ENCODE measurements at regions of chr21 and their contacts with region 1.

Region 1: GRCh38 chr21:26715878-26716506 is 129.2 kb downstream of the ADAMTS1 start:
- DNase-seq: no peak
- H3K4me3 ChIP-seq: no peak overlapping the region
- H3K27ac ChIP-seq: no peak overlapping the region
- H3K4me1 ChIP-seq: no peaks in the 10 kb centered on the region
- H3K27me3 ChIP-seq: no peaks in the 10 kb centered on the region
- CTCF ChIP-seq: peak in 3 of 4 experiments; percentile 32 to 70 (median 52)
- EP300 ChIP-seq: no peak
- POLR2A ChIP-seq: no peak

Region 2: GRCh38 chr21:25881525-25882376 is 834.2 kb before region 1 on chr21:
- intact Hi-C with region 1: loop called (anchors 2 kb)
- DNase-seq: peak; percentile 83
- H3K4me3 ChIP-seq: no peak overlapping the region
- H3K27ac ChIP-seq: no peak overlapping the region
- H3K4me1 ChIP-seq: no peaks in the 10 kb centered on the region
- H3K27me3 ChIP-seq: no peaks in the 10 kb centered on the region
- CTCF ChIP-seq: peak; percentile 64 to 96 (median 82)
- EP300 ChIP-seq: no peak
- POLR2A ChIP-seq: no peak